ENCODE measurements at regions of chr4 and their contacts with region 1.

Region 1: DNA sequence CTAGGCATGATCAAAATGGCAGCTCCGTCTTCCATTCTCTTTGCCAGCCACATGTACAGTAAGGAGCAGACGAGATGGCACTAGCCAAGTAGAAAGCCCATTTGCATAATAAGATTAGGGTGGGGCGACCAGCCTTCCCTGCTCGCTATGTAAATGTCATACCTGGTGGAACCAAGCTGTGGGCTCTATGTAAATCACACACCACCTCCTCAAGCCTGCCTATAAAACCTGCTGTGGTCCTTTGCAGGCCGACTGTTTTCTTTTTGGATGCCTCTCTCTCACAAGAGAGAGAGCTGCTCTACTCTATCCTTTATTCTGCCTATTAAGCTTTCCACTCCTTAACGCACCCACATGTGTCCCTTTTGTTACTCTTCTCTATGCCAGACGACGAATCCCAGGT is 1472.7 kb downstream of the ARAP2 start:
- DNase-seq: no peak
- H3K4me3 ChIP-seq: no peak overlapping the region
- H3K27ac ChIP-seq: no peak overlapping the region
- H3K4me1 ChIP-seq: no peaks in the 10 kb centered on the region
- H3K27me3 ChIP-seq: no peaks in the 10 kb centered on the region
- CTCF ChIP-seq: no peak
- POLR2A ChIP-seq: no peak

Region 2: GRCh38 chr4:34733185-34733941 is 38.3 kb before region 1 on chr4:
- intact Hi-C with region 1: no loop called
- DNase-seq: no peak
- H3K4me3 ChIP-seq: no peak overlapping the region
- H3K27ac ChIP-seq: no peak overlapping the region
- H3K4me1 ChIP-seq: no peaks in the 10 kb centered on the region
- H3K27me3 ChIP-seq: no peaks in the 10 kb centered on the region
- CTCF ChIP-seq: no peak
- POLR2A ChIP-seq: no peak

Region 3: GRCh38 chr4:34826660-34827059 is 55.0 kb after region 1 on chr4:
- intact Hi-C with region 1: loop called (anchors 2 kb)
- DNase-seq: no peak
- H3K4me3 ChIP-seq: no peak overlapping the region
- H3K27ac ChIP-seq: no peak overlapping the region
- H3K4me1 ChIP-seq: no peaks in the 10 kb centered on the region
- H3K27me3 ChIP-seq: no peaks in the 10 kb centered on the region
- CTCF ChIP-seq: no peak
- POLR2A ChIP-seq: no peak

Region 4: DNA sequence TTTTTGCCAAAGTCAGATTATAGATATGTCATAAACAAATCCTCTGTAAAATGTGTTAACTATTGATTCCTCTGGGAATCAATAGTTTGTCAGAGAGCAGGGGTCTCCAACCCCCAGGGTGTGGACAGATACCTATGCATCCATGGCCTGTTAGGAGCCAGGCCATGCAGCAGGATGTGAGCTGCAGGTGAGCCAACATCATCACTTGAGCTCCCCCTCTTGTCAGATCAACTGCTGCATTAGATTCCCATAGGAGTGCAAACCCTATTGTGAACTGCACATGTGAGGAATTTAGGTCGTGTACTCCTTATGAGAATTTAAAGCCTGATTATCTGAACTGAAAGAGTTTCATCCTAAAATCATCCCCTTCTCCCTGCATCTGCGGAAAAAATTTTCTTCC is 107.3 kb after region 1 on chr4:
- intact Hi-C with region 1: no loop called
- DNase-seq: no peak
- H3K4me3 ChIP-seq: no peak overlapping the region
- H3K27ac ChIP-seq: no peak overlapping the region
- H3K4me1 ChIP-seq: no peaks in the 10 kb centered on the region
- H3K27me3 ChIP-seq: no peaks in the 10 kb centered on the region
- CTCF ChIP-seq: no peak
- POLR2A ChIP-seq: no peak

Measured in vagina (tissue), 2 donors.